HEK293 (cell line): ENCODE measurements at regions of chr16 and their contacts with region 1.

Region 1: DNA sequence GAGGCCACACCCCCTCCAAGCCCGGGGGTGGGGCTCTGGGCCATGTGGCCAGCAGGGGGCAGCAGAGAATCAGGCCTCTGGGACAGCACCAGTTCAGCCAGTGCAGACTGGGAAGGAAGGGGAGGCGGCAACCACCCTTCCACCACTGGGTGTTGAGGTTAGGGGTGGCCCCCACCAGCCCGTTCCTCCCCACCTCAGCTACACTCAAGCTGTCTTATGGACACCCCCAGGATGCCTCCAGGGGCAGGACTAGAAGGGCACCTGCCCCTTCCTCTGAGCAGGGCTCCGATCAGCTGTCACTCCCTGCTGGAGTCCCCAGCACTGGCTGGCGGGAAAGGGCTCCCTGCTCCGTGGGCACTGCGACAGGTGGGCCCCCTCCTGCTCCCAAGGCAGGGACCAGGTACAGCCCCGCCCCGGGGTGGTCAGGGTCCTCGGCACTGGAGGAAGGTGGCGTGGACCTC is 21.8 kb downstream of the KATNB1 start:
- H3K4me3 ChIP-seq: no peak overlapping the region
- H3K27ac ChIP-seq: no peak overlapping the region
- H3K4me1 ChIP-seq: no peaks in the 10 kb centered on the region
- CTCF ChIP-seq: peak; percentile 91

Region 2: GRCh38 chr16:57667526-57668258 is 89.7 kb before region 1 on chr16:
- CTCF ChIA-PET with region 1: no interaction called
- POLR2A ChIA-PET with region 1: no interaction called
- H3K4me3 ChIP-seq: no peak overlapping the region
- H3K27ac ChIP-seq: no peak overlapping the region
- H3K4me1 ChIP-seq: no peaks in the 10 kb centered on the region
- CTCF ChIP-seq: 0 out of 2 replicates have a peak, but pooled peaks have one; percentile 23

Region 3: DNA sequence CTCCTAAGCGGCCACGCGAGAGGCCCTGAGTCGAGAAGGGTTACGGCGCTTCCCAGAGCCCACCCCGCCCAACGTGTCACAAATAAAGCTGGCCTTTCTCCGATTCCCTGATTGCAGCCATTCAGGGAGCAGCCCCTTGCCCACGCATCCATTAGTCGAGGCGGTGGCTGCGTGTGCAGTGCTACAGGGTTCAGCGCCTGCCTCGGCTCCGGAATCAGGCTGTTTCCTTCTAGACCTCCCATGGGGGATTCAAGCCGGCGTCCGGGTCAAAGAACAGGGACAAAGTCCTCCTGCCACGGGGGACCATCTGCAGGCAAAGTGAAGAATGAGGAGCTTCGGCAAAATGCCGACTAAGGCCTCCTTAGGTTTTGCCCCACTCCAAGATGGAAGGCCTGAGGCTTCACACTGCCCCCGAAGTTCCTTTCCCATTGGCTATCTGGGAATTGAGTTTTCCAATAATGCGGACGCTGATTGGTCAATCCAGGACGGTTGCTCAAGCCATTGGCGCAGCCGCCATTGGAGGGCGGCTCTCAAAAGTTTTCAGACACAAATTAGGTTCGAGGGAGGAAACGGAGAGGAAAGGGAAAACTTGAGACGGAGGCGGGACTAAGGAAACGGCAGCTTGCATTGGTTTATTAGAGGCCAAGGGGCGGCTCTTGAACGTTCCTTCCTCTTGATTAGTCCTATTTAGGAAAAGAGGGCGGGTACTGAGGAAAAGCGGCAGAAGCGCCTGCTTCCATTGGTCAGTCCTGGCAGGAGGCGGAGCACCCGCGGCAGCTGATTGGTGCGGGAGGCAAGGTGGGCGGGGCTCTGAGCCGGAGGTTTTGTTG is 22.2 kb before region 1 on chr16:
- CTCF ChIA-PET with region 1: interaction called, 11 read pairs
- POLR2A ChIA-PET with region 1: interaction called, 5 read pairs
- H3K4me3 ChIP-seq: peak overlapping the region; percentile 81
- H3K27ac ChIP-seq: peak overlapping the region; percentile 73
- H3K4me1 ChIP-seq: peaks cover 6% of the 10 kb centered on the region; the same call in 1 of the 2 replicates
- CTCF ChIP-seq: no peak